Activated CD4-positive, alpha-beta T cell treated with anti-CD3 and anti-CD28 coated beads, Interleukin-2, amount 10 ng/mL, durations not matched to agents 24 days and 14 days (primary cell): ENCODE measurements at regions of chr10 and their contacts with region 1.

Region 1: GRCh38 chr10:71696628-71697326 is 22.8 kb downstream of the C10orf105 start:
- DNase-seq: peak; percentile 90
- H3K4me3 Mint-ChIP-seq: no peak overlapping the region
- H3K27ac Mint-ChIP-seq: no peak overlapping the region
- H3K4me1 Mint-ChIP-seq: peaks cover 39% of the 10 kb centered on the region
- H3K27me3 Mint-ChIP-seq: no peaks in the 10 kb centered on the region

Region 2: GRCh38 chr10:71748671-71749191 is 52.0 kb after region 1 on chr10:
- intact Hi-C with region 1: no loop called
- DNase-seq: peak; percentile 95
- H3K4me3 Mint-ChIP-seq: peak overlapping the region; percentile 78
- H3K27ac Mint-ChIP-seq: peak overlapping the region; percentile 99
- H3K4me1 Mint-ChIP-seq: peaks cover 91% of the 10 kb centered on the region
- H3K27me3 Mint-ChIP-seq: no peaks in the 10 kb centered on the region

Region 3: GRCh38 chr10:71812016-71812912 is 115.5 kb after region 1 on chr10:
- intact Hi-C with region 1: loop called (anchors 5 kb)
- DNase-seq: peak; percentile 92
- H3K4me3 Mint-ChIP-seq: no peak overlapping the region
- H3K27ac Mint-ChIP-seq: peak overlapping the region; percentile 11
- H3K4me1 Mint-ChIP-seq: peaks cover 2% of the 10 kb centered on the region
- H3K27me3 Mint-ChIP-seq: no peaks in the 10 kb centered on the region

Region 4: GRCh38 chr10:71878327-71879034 is 181.7 kb after region 1 on chr10:
- intact Hi-C with region 1: no loop called
- DNase-seq: peak; percentile 72
- H3K4me3 Mint-ChIP-seq: no peak overlapping the region
- H3K27ac Mint-ChIP-seq: no peak overlapping the region
- H3K4me1 Mint-ChIP-seq: peaks cover 14% of the 10 kb centered on the region
- H3K27me3 Mint-ChIP-seq: no peaks in the 10 kb centered on the region